K562 (cell line): ENCODE measurements at regions of chrX and their contacts with region 1.

Region 1: DNA sequence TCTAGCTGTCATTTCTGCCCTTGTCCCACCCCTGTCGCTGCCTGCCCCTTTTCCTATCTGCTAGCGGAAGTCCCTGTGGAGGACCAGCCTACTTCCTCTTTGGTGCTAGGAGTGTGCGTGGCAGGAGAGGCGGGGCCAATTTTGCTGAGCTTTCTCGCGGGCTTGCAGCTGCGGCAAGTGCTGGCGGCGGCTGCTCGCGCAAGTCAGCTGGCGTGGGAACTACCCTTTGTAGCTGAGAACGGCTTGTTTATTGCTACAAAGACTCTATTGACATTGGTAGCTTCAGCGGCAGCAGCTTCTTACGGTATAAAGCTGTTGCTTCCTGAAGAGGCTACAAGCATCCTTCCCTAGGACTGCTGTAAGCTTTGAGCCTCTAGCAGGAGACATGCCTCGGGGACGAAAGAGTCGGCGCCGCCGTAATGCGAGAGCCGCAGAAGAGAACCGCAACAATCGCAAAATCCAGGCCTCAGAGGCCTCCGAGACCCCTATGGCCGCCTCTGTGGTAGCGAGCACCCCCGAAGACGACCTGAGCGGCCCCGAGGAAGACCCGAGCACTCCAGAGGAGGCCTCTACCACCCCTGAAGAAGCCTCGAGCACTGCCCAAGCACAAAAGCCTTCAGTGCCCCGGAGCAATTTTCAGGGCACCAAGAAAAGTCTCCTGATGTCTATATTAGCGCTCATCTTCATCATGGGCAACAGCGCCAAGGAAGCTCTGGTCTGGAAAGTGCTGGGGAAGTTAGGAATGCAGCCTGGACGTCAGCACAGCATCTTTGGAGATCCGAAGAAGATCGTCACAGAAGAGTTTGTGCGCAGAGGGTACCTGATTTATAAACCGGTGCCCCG is at the start of gene MAGEH1:
- DNase-seq: peak; percentile 41 to 81 (median 56)
- ATAC-seq: peak; percentile 98
- H3K4me3 ChIP-seq: peak within 1 kb of the TSS; percentile 52
- H3K27ac ChIP-seq: no peak within 1 kb of the TSS; the same call in 2 of the 3 replicates
- H3K4me1 ChIP-seq: no peaks in the 10 kb centered on the region
- H3K27me3 ChIP-seq: no peaks in the 10 kb centered on the region
- CTCF ChIP-seq: no peak
- EP300 ChIP-seq: no peak
- POLR2A ChIP-seq: peak; percentile 61
- RAD21 ChIP-seq: no peak
- polyA plus RNA-seq, gene MAGEH1: 3.7 to 4.1 TPM

Region 2: GRCh38 chrX:55524487-55524886 is 72.3 kb after region 1 on chrX:
- CTCF ChIA-PET with region 1: no interaction called
- POLR2A ChIA-PET with region 1: no interaction called
- in situ Hi-C with region 1: no loop called
- intact Hi-C with region 1: loop called (anchors 10 kb)
- DNase-seq: peak in 1 of 4 experiments; percentile 11
- ATAC-seq: peak; percentile 52; the same call in 1 of the 3 replicates
- H3K4me3 ChIP-seq: no peak overlapping the region
- H3K27ac ChIP-seq: no peak overlapping the region
- H3K4me1 ChIP-seq: no peaks in the 10 kb centered on the region
- H3K27me3 ChIP-seq: no peaks in the 10 kb centered on the region
- CTCF ChIP-seq: peak in 1 of 3 experiments; percentile 15; a peak in 2 of 6 replicates
- EP300 ChIP-seq: no peak
- POLR2A ChIP-seq: no peak
- RAD21 ChIP-seq: peak in 1 of 2 experiments; percentile 43; a peak in 2 of 4 replicates

Region 3: GRCh38 chrX:55619547-55619946 is 167.3 kb after region 1 on chrX:
- CTCF ChIA-PET with region 1: no interaction called
- POLR2A ChIA-PET with region 1: no interaction called
- in situ Hi-C with region 1: no loop called
- intact Hi-C with region 1: no loop called
- DNase-seq: no peak
- ATAC-seq: no peak
- H3K4me3 ChIP-seq: no peak overlapping the region
- H3K27ac ChIP-seq: no peak overlapping the region
- H3K4me1 ChIP-seq: no peaks in the 10 kb centered on the region
- H3K27me3 ChIP-seq: no peaks in the 10 kb centered on the region
- CTCF ChIP-seq: no peak
- EP300 ChIP-seq: no peak
- POLR2A ChIP-seq: no peak
- RAD21 ChIP-seq: no peak

Region 4: GRCh38 chrX:55695227-55696018 is 243.2 kb after region 1 on chrX:
- CTCF ChIA-PET with region 1: no interaction called
- POLR2A ChIA-PET with region 1: no interaction called
- in situ Hi-C with region 1: no loop called
- intact Hi-C with region 1: no loop called
- DNase-seq: no peak
- ATAC-seq: no peak
- H3K4me3 ChIP-seq: no peak overlapping the region
- H3K27ac ChIP-seq: no peak overlapping the region
- H3K4me1 ChIP-seq: no peaks in the 10 kb centered on the region
- H3K27me3 ChIP-seq: no peaks in the 10 kb centered on the region
- CTCF ChIP-seq: no peak
- EP300 ChIP-seq: no peak
- POLR2A ChIP-seq: no peak
- RAD21 ChIP-seq: no peak

Region 5: DNA sequence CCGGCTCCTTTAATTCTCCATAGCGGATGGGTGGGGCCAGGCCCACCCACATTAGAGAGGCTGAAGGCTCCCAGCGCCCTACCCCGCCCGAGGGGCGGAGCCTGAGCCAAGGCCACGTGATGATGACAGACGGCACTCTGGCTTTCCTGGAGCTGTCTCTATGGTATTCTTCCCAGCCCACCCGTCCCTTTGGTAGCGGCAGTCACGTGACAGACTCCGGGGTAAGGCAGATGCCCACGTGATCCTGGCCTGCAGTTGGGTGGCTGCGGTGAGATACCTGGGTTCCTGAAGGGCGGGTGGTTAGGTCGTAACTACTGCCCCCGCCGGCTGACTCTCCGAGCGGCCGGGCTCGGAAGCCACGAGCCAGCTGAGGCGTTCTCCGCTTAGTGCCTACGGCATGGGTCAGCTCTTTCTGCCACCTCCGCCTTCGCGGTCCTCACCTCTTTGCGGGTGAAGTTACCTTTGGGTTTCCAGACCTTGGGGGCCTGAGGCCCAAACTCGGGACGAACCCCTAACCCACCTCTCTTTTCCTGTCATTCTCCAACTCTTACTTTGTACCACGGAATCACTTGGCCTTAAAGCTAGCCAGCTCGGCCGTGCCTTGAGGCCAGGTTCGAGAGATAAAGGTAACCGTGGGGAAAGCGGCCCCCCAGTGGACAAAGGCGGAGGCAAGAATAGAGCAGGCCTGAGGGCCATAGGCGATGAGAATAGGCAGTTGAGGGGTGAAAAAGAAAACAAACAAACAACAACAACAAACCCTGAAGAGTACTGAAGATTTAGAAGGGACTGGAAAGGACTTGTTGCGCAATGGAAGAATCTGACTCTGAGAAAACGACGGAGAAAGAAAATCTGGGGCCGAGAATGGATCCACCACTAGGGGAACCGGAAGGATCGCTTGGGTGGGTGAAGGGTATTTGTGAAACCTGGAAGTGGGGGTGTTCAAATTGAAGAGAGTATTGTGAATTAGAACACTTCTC is 265.6 kb after region 1 on chrX and contains the start of gene RRAGB:
- CTCF ChIA-PET with region 1: interaction called, 4 read pairs
- POLR2A ChIA-PET with region 1: interaction called, 3 read pairs
- in situ Hi-C with region 1: no loop called
- intact Hi-C with region 1: loop called (anchors 10 kb)
- DNase-seq: peak; percentile 88 to 92 (median 90)
- ATAC-seq: peak; percentile 99
- H3K4me3 ChIP-seq: peak within 1 kb of the TSS; percentile 56
- H3K27ac ChIP-seq: peak within 1 kb of the TSS; percentile 79
- H3K4me1 ChIP-seq: peaks cover 0 to 5% of the 10 kb centered on the region in 2 experiments; a peak in 1 of 5 replicates
- H3K27me3 ChIP-seq: no peaks in the 10 kb centered on the region
- CTCF ChIP-seq: peak; percentile 54 to 73 (median 65)
- EP300 ChIP-seq: no peak
- POLR2A ChIP-seq: peak; percentile 66
- RAD21 ChIP-seq: peak; percentile 31 to 37; a peak in 3 of 4 replicates
- polyA plus RNA-seq, gene RRAGB: 7.9 to 8.5 TPM

Region 6: GRCh38 chrX:55919367-55920221 is 467.4 kb after region 1 on chrX:
- CTCF ChIA-PET with region 1: no interaction called
- POLR2A ChIA-PET with region 1: no interaction called
- in situ Hi-C with region 1: no loop called
- intact Hi-C with region 1: no loop called
- DNase-seq: no peak
- ATAC-seq: no peak
- H3K4me3 ChIP-seq: no peak overlapping the region
- H3K27ac ChIP-seq: no peak overlapping the region
- H3K4me1 ChIP-seq: no peaks in the 10 kb centered on the region
- H3K27me3 ChIP-seq: no peaks in the 10 kb centered on the region
- CTCF ChIP-seq: no peak
- EP300 ChIP-seq: no peak
- POLR2A ChIP-seq: no peak
- RAD21 ChIP-seq: no peak